HEK293T (cell line): ENCODE measurements at regions of chr10 and their contacts with region 1.

Region 1: GRCh38 chr10:21516242-21517131 is 9.0 kb downstream of the SKIDA1 start:
- DNase-seq: no peak

Region 2: DNA sequence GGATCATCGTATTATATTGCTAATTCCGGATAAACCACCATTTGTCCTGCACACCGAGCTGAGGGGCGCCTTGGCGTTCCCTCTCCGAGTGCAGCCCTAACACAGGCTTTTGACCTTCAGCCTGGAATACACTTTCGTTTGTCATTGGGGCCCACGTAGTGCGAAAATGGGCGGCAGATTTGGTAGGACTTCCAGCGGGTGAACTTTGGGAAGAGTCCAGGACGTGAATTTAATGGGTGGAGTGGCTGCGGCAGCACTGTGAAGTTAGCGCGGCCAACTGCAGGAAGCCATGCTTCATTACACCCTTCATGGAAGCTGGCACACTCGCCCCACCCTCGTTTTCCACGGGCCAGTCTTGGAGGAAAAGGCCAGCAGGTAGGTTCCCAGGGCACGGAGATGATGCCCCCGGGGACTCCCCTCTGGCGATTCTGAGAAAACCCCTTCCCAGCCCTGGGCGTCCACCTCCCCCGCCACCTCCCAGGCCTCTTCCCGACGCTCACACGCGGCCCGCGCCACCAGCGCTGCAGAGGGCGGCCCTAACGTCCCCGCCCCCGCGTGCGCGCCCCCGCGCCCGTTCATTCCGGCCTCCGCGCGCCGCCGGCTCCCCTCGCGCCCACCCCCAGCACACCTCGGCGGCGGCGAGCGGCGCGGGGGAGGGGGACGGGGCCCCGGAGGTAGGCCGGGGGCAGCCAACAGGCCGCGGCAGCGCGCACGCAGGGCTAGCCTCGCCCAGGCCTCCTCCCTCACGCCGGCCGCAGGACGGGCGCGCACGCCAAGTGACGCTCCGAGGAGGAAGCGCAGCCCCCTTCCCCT is 17.2 kb after region 1 on chr10 and contains the start of gene MLLT10:
- CTCF ChIA-PET with region 1: no interaction called
- POLR2A ChIA-PET with region 1: interaction called, 22 read pairs
- DNase-seq: peak; percentile 88